ENCODE measurements at regions of chr12 and their contacts with region 1.

Region 1: DNA sequence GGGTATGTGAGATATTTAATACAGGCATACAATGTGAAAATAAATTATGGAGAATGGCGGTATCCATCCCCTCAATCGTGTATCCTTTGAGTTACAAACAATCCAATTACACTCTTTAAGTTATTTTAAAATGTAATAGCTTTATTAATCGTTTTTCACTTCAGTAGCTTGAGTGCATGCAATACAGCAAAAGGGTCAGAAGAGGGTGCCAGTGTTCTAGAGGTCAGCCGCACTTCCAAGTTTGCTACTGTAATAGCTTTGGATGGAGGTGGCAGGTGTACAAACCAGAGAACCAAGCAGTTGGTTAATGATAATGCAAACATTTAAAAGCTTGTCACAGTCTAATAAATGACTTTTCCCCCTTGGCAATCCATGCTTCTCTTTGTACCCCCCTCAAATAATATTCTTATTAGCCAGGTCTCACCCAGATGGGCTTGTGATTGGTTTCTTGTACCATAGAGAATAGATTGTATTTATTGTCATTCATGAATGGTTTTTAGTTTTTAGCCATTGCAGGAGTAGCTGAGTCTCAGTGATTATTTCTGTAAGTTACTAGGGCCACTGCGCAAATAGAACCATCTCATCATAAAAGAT is 127.0 kb downstream of the ERC1 start:
- DNase-seq: peak in 1 of 2 experiments; percentile 69
- H3K4me3 ChIP-seq: no peak overlapping the region
- H3K27ac ChIP-seq: no peak overlapping the region
- H3K4me1 ChIP-seq: no peaks in the 10 kb centered on the region
- H3K27me3 ChIP-seq: peaks cover 9 to 29% (median 24%) of the 10 kb centered on the region in 4 experiments
- CTCF ChIP-seq: peak; percentile 31 to 82 (median 74)
- EP300 ChIP-seq: no peak
- POLR2A ChIP-seq: no peak
- RAD21 ChIP-seq: peak; percentile 93 to 94

Region 2: DNA sequence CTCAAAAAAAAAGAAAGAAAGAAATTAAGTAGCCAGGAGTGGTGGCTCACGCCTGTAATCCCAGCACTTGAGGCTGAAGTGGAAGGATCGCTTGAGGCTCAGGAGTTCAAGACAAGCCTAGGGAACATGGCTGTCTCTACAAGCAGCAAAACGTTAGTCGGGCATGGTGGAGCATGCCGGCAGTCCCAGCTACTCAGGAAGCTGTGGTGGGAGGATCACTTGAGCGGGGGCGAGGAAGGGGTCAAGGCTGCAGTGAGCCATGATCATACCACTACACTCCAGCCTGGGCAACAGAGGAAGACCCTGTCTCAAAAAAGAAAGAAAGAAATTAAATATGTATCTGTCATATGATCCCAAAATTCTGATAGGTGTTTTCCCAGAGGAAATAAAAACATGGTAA is 173.9 kb before region 1 on chr12:
- CTCF ChIA-PET with region 1: no interaction called
- POLR2A ChIA-PET with region 1: no interaction called
- DNase-seq: no peak
- H3K4me3 ChIP-seq: no peak overlapping the region
- H3K27ac ChIP-seq: no peak overlapping the region
- H3K4me1 ChIP-seq: no peaks in the 10 kb centered on the region
- H3K27me3 ChIP-seq: no peaks in the 10 kb centered on the region
- CTCF ChIP-seq: no peak
- EP300 ChIP-seq: no peak
- POLR2A ChIP-seq: no peak
- RAD21 ChIP-seq: no peak

Region 3: DNA sequence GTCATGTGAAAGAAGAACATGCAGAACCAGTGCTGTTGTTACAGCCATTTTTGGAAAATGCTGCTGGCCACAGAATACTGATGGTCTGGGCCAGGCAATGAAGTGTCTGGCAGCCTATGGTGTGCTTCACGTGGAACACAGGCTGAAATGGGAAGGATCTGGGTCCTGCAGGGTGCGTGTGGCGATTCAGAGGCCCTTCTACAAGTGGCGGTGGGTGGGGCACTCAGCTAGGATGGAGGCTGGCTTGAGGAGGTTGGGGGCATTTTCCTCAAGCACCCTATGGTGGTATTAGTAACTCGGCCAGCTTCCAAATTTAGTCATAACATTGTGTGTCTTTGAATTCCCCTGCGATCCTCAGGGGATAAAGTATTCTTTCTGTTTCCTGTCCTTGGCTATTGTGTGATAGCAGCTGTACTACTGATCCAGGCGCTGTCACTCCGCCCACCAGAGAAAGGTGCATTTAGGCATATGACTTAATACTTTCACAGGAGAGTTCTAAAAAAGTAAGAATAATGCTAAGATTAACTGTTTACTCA is 159.4 kb before region 1 on chr12:
- CTCF ChIA-PET with region 1: no interaction called
- POLR2A ChIA-PET with region 1: no interaction called
- DNase-seq: no peak
- H3K4me3 ChIP-seq: no peak overlapping the region
- H3K27ac ChIP-seq: no peak overlapping the region
- H3K4me1 ChIP-seq: no peaks in the 10 kb centered on the region
- H3K27me3 ChIP-seq: no peaks in the 10 kb centered on the region; a peak in 1 of 7 replicates
- CTCF ChIP-seq: no peak
- EP300 ChIP-seq: no peak
- POLR2A ChIP-seq: no peak
- RAD21 ChIP-seq: no peak

Region 4: DNA sequence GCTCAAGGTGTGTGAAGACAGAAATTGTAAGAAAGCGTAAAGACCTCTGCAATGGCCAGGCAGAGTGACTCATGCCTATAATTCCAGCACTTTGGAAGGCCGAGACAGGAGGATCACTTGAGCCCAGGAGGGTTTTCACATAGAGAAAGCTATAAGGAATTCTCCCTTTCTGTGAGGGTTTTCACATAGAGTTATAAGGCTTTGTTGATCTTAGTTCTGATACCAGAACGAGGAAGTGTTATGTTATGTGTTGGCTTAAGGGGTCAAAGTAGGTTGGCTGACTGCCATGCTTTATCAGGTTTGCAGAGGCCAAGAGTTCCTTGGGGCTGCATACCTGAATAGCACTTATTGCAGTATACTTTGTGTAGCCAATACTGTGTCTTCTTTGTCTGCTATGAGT is 12.1 kb after region 1 on chr12:
- CTCF ChIA-PET with region 1: interaction called, 21 read pairs
- POLR2A ChIA-PET with region 1: no interaction called
- DNase-seq: no peak
- H3K4me3 ChIP-seq: no peak overlapping the region
- H3K27ac ChIP-seq: no peak overlapping the region
- H3K4me1 ChIP-seq: no peaks in the 10 kb centered on the region
- H3K27me3 ChIP-seq: no peaks in the 10 kb centered on the region; a peak in 1 of 7 replicates
- CTCF ChIP-seq: no peak
- EP300 ChIP-seq: no peak
- POLR2A ChIP-seq: no peak
- RAD21 ChIP-seq: no peak

Region 5: DNA sequence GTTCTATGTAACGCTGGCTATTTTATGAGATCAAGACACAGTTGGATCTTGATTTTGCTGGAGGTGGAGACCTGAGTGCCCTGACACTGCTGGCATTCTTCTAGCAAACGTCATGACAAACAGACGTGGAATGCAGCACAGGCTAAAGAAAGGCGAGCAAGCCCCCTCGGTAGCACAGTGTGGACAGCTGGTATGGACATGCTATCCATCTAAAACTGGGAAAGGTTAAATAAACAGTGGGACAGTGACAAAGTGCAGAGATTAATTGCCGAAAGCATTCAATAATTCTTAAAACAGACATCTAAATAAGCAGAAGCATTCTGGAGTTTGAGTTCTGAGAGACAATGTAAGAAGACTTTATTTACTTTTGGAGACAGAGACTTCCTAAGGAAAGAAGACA is 239.1 kb after region 1 on chr12:
- CTCF ChIA-PET with region 1: interaction called, 16 read pairs
- POLR2A ChIA-PET with region 1: no interaction called
- DNase-seq: no peak
- H3K4me3 ChIP-seq: no peak overlapping the region
- H3K27ac ChIP-seq: no peak overlapping the region
- H3K4me1 ChIP-seq: no peaks in the 10 kb centered on the region
- H3K27me3 ChIP-seq: no peaks in the 10 kb centered on the region
- CTCF ChIP-seq: no peak
- EP300 ChIP-seq: no peak
- POLR2A ChIP-seq: no peak
- RAD21 ChIP-seq: no peak

Region 6: GRCh38 chr12:1566449-1567135 is 448.5 kb after region 1 on chr12:
- CTCF ChIA-PET with region 1: interaction called, 12 read pairs
- POLR2A ChIA-PET with region 1: no interaction called
- DNase-seq: no peak
- H3K4me3 ChIP-seq: no peak overlapping the region
- H3K27ac ChIP-seq: no peak overlapping the region
- H3K4me1 ChIP-seq: no peaks in the 10 kb centered on the region
- H3K27me3 ChIP-seq: no peaks in the 10 kb centered on the region; a peak in 1 of 7 replicates
- CTCF ChIP-seq: no peak
- EP300 ChIP-seq: no peak
- POLR2A ChIP-seq: no peak
- RAD21 ChIP-seq: no peak

Region 7: DNA sequence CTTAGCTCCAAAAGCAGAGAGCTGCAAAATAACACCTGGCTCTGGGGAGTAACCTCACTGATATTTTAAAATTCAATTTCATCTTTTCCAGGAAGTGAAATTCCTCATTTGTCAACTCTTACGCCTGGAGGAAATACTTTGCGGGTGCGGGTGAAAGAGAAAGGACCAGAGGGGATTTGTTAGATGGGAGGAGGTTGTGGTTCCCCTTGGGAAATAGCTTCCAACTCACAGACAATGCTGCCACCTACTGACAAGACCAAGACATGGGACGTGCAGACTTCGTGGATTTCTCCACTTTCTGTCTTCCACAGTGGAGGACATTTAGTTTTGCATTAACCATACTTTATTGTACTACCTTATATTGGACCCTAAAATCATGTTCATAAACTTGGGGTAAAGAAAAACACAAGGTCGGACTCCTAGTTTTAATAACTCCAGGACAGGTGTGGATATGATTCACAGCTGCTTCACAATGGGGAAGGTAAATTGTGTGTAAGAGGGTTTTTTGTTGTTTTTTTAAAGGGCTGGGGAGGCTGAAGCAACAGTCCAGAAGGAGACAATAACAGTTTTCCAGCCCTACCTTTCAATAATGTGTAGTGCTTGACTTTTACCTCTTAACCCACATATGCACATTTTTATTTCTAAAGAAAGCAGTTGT is 465.5 kb after region 1 on chr12:
- CTCF ChIA-PET with region 1: interaction called, 66 read pairs
- POLR2A ChIA-PET with region 1: interaction called, 5 read pairs
- DNase-seq: peak in 1 of 2 experiments; percentile 64
- H3K4me3 ChIP-seq: no peak overlapping the region
- H3K27ac ChIP-seq: no peak overlapping the region
- H3K4me1 ChIP-seq: peaks cover 0 to 8% (median 2%) of the 10 kb centered on the region in 4 experiments; a peak in 4 of 7 replicates
- H3K27me3 ChIP-seq: peaks cover 6 to 51% (median 33%) of the 10 kb centered on the region in 4 experiments
- CTCF ChIP-seq: peak; percentile 71 to 94 (median 86)
- EP300 ChIP-seq: no peak
- POLR2A ChIP-seq: no peak
- RAD21 ChIP-seq: peak; percentile 98 to 99

Region 8: GRCh38 chr12:1605129-1606020 is 487.3 kb after region 1 on chr12:
- CTCF ChIA-PET with region 1: interaction called, 10 read pairs
- POLR2A ChIA-PET with region 1: no interaction called
- DNase-seq: peak in 1 of 2 experiments; percentile 69
- H3K4me3 ChIP-seq: peak overlapping the region; percentile 12 to 56 (median 40); a peak in 7 of 8 replicates
- H3K27ac ChIP-seq: no peak overlapping the region
- H3K4me1 ChIP-seq: peaks cover 0 to 7% (median 2%) of the 10 kb centered on the region in 4 experiments; a peak in 5 of 7 replicates
- H3K27me3 ChIP-seq: peaks cover 0 to 17% (median 15%) of the 10 kb centered on the region in 4 experiments; a peak in 5 of 7 replicates
- CTCF ChIP-seq: peak; percentile 63 to 86 (median 66)
- EP300 ChIP-seq: no peak
- POLR2A ChIP-seq: no peak
- RAD21 ChIP-seq: peak; percentile 82 to 84